ENCODE measurements at regions of chrX and their contacts with region 1.

Region 1: GRCh38 chrX:103711533-103712369 is 1.0 kb downstream of the TMEM31 start:
- H3K4me3 ChIP-seq: no peak overlapping the region
- H3K27ac ChIP-seq: no peak overlapping the region
- H3K4me1 ChIP-seq: no peaks in the 10 kb centered on the region
- CTCF ChIP-seq: peak; percentile 67

Region 2: DNA sequence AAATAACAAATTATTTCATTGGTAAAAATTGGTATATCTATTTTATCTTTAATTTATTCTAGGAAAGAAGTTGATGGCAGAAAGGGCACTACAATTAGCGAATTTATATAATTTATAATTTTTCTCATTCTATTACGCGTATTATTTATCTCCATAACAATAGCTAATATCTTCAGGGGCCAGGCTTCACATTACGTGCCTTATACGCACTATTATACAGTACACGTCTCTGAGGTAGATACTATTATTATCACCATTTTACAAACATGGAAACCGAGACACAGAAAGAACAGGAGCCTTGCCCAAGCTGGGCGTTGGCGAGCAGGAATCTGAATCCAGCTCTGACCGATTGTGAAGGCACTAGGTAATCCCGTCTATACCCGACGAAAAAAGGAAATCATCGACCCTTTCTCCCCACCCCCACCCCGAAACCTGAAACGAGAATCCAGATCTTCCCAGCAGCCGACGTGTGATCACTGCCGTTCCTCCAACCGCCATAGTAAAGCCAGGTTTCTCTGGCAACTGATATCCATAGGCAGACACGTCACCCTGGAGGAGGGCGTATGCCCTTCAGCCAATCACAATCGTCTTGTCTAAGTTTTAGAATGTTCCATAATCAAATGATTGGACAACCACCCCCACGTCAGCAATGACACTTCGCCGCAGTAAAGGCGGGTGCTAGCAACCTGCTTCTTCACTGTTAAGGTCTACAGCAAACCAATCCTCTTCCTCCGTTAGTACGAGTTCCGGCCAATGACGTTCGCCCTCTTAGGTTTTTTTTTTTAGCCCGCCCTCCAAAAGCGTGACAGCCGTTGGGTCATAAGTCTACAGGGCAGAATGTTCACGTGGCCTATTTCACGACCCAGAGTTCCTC is 25.3 kb before region 1 on chrX and contains the start of gene MORF4L2:
- CTCF ChIA-PET with region 1: interaction called, 12 read pairs
- POLR2A ChIA-PET with region 1: no interaction called
- H3K4me3 ChIP-seq: peak within 1 kb of the TSS; percentile 80
- H3K27ac ChIP-seq: peak within 1 kb of the TSS; percentile 87
- H3K4me1 ChIP-seq: peaks cover 2% of the 10 kb centered on the region; the same call in 1 of the 2 replicates
- CTCF ChIP-seq: no peak

Region 3: GRCh38 chrX:103726477-103726876 is 14.7 kb after region 1 on chrX:
- CTCF ChIA-PET with region 1: interaction called, 10 read pairs
- POLR2A ChIA-PET with region 1: interaction called, 5 read pairs
- H3K4me3 ChIP-seq: no peak overlapping the region
- H3K27ac ChIP-seq: no peak overlapping the region
- H3K4me1 ChIP-seq: no peaks in the 10 kb centered on the region; the same call in 1 of the 2 replicates
- CTCF ChIP-seq: no peak

Region 4: DNA sequence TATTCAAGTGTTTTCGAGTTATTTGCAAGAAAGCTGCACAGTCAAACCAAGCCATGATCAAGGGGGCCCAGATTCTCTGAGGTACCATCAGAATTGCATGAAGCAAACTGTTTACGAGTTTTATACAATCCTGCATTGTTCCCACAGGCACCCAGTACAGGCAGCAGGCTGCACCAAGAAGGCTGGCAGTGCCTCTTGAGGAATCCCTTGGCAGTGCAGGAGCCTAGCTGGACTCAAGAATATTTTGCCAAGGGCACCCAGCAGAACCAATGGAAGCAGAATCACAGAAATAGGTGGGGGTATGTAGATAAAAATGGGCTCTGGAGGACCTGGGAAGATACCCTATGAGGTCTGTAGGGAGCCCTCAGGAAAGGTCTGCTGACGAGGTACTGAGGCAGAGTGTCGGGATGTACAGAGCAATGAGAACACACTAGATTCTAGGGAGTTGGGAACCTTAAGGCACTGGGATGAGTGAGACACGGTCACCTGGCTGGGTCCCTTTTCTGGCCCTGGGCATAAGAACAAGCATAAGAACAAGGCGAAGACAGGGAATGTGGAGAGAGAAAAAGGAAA is 62.4 kb after region 1 on chrX:
- CTCF ChIA-PET with region 1: interaction called, 17 read pairs
- POLR2A ChIA-PET with region 1: no interaction called
- H3K4me3 ChIP-seq: no peak overlapping the region
- H3K27ac ChIP-seq: no peak overlapping the region
- H3K4me1 ChIP-seq: no peaks in the 10 kb centered on the region
- CTCF ChIP-seq: 0 out of 2 replicates have a peak, but pooled peaks have one; percentile 7

Region 5: GRCh38 chrX:103817502-103817901 is 105.8 kb after region 1 on chrX:
- CTCF ChIA-PET with region 1: interaction called, 19 read pairs
- POLR2A ChIA-PET with region 1: no interaction called
- H3K4me3 ChIP-seq: no peak overlapping the region
- H3K27ac ChIP-seq: no peak overlapping the region
- H3K4me1 ChIP-seq: no peaks in the 10 kb centered on the region
- CTCF ChIP-seq: no peak